ENCODE measurements at regions of chr2 and their contacts with region 1.

Region 1: GRCh38 chr2:230668184-230668938 is 44.3 kb upstream of the CAB39 start:
- DNase-seq: peak; percentile 44
- H3K4me3 Mint-ChIP-seq: no peak overlapping the region
- H3K27ac Mint-ChIP-seq: peak overlapping the region; percentile 89
- H3K4me1 Mint-ChIP-seq: peaks cover 84% of the 10 kb centered on the region
- H3K27me3 Mint-ChIP-seq: no peaks in the 10 kb centered on the region

Region 2: DNA sequence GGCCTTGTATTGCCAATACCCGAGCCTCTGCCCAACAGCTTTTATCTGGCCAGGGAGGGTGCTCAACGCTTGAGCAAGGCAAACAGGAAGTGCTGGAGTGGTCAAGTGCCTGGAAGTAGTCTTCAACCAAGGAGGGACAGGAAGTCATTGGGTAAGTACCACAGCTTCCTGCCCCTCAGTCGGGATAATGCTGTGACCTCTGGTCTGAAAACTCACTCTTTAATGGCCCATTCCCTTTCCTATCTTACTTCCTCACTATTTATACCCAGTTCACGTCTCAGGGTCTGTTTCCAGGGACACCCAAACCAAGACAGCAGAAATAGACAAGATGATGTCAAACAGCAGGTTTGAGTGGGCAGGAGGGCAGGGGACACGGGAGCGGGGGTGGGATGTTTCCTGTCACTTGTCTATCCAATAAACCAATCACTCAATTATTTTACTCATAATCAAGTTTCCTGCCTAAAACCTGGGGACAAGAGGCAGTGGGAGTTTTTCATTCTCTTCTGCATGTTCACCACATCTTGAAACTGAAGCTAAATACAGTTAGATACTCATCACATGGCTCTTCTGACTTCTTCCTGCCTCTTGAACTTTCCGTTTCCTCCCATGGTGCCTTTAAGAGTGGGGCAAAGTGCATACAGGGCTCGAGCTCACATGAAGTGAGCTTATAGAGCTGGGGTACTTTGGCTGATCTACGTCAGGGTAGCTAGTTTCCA is 24.6 kb before region 1 on chr2:
- CTCF ChIA-PET with region 1: interaction called, 3 read pairs
- POLR2A ChIA-PET with region 1: interaction called, 19 read pairs
- DNase-seq: peak; percentile 51
- H3K4me3 Mint-ChIP-seq: peak overlapping the region; percentile 34
- H3K27ac Mint-ChIP-seq: peak overlapping the region; percentile 90
- H3K4me1 Mint-ChIP-seq: peaks cover 38% of the 10 kb centered on the region
- H3K27me3 Mint-ChIP-seq: no peaks in the 10 kb centered on the region

Region 3: DNA sequence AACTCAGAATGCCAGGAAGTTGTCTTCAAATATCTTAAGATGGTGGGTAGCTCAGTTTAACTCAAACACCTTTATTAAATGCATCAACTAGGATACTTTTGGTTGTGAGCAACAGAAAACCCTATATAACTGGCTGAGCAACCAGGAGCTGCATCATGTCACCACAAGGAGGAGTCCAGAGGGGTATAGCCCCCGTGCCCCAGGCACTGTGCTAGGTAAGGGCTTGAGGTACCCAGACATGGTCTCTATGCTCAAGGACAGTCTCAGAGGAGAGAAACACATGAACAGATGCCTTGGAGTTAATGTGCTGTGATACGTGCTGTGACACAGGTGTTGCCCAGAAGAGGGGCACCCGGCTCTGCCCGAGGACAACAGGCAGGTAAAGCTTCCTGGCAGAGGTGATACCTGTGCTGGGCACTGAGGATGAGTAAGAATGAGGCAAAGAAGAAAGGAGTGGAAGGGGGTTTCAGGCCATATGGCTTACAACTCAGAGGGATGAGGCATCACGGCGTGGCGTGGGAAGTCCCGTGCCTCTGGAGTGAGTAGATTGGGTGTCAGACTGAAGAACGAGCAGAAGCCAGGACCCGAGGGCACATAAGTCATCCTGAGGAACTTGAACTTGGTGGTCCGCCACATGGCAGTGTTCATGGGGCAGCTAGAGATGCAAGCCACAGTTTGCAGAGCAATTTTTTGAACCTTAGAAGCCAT is 12.3 kb after region 1 on chr2:
- CTCF ChIA-PET with region 1: interaction called, 22 read pairs
- POLR2A ChIA-PET with region 1: interaction called, 27 read pairs
- DNase-seq: no peak
- H3K4me3 Mint-ChIP-seq: no peak overlapping the region
- H3K27ac Mint-ChIP-seq: no peak overlapping the region
- H3K4me1 Mint-ChIP-seq: peaks cover 60% of the 10 kb centered on the region
- H3K27me3 Mint-ChIP-seq: no peaks in the 10 kb centered on the region

Region 4: GRCh38 chr2:230723363-230723762 is 55.0 kb after region 1 on chr2:
- CTCF ChIA-PET with region 1: no interaction called
- POLR2A ChIA-PET with region 1: no interaction called
- DNase-seq: peak; percentile 20
- H3K4me3 Mint-ChIP-seq: peak overlapping the region; percentile 9
- H3K27ac Mint-ChIP-seq: peak overlapping the region; percentile 72
- H3K4me1 Mint-ChIP-seq: peaks cover 65% of the 10 kb centered on the region
- H3K27me3 Mint-ChIP-seq: no peaks in the 10 kb centered on the region

Measured in activated CD4-positive, alpha-beta memory T cell treated with anti-CD3 and anti-CD28 coated beads, Interleukin-2, amount 10 ng/mL, durations not matched to agents 7 days and 5 days (primary cell).